AG04449 (cell line): ENCODE measurements at regions of chr19 and their contacts with region 1.

Region 1: GRCh38 chr19:38769635-38770211 is 3.6 kb downstream of the LGALS7 start:
- DNase-seq: no peak
- H3K4me3 ChIP-seq: peak overlapping the region; percentile 18; the same call in 1 of the 2 replicates
- CTCF ChIP-seq: peak; percentile 81

Region 2: GRCh38 chr19:38514812-38515633 is 254.7 kb before region 1 on chr19:
- CTCF ChIA-PET with region 1: no interaction called
- POLR2A ChIA-PET with region 1: no interaction called
- DNase-seq: no peak
- H3K4me3 ChIP-seq: no peak overlapping the region
- CTCF ChIP-seq: peak; percentile 90

Region 3: DNA sequence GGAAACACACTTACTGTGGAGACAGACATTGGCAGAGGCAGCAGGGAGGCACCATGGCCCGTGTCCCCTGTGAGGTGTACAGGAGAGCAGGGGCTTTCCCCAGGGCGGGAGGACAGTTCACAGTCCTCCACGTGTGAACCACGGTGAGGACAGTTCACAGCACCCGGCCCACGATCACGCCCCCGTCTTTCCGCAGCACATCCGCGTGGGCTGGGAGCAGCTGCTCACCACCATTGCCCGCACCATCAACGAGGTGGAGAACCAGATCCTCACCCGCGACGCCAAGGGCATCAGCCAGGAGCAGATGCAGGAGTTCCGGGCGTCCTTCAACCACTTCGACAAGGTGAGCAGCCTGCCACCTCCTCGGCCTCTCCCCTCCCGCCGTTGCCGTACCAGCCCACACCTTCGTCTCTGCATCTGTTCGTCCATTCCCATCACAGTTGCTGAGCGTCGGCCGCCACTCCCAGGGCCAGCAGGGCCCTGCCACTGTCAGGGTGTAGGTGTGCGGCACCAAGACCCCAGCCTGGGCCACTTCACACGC is 42.9 kb before region 1 on chr19:
- CTCF ChIA-PET with region 1: no interaction called
- POLR2A ChIA-PET with region 1: no interaction called
- DNase-seq: no peak
- H3K4me3 ChIP-seq: no peak overlapping the region
- CTCF ChIP-seq: no peak

Region 4: DNA sequence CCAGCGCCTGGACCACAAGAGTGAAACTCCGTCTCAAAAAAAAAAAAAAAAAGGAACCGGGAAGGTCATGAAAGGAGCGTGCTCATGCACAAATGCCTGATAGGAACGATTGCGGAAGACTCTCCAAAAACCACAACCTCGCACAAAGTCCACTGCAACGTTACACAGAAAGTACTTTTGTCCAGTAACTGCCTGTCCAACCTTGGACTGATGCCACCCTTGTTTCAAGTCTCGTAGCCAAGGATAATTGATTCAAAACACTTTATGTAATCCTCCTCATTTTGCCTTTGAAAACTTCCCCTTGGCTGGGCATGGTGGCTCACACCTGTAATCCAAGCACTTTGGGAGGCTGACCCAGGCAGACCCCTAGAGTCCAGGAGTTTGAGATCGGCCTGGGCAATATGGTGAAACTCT is 10.1 kb before region 1 on chr19:
- CTCF ChIA-PET with region 1: interaction called, 19 read pairs
- POLR2A ChIA-PET with region 1: no interaction called
- DNase-seq: no peak
- H3K4me3 ChIP-seq: no peak overlapping the region
- CTCF ChIP-seq: no peak

Region 5: GRCh38 chr19:38781058-38781457 is 11.3 kb after region 1 on chr19:
- CTCF ChIA-PET with region 1: interaction called, 25 read pairs
- POLR2A ChIA-PET with region 1: no interaction called
- DNase-seq: no peak
- H3K4me3 ChIP-seq: no peak overlapping the region
- CTCF ChIP-seq: no peak

Region 6: GRCh38 chr19:38786572-38787265 is 17.0 kb after region 1 on chr19:
- CTCF ChIA-PET with region 1: interaction called, 25 read pairs
- POLR2A ChIA-PET with region 1: no interaction called
- DNase-seq: no peak
- H3K4me3 ChIP-seq: no peak overlapping the region
- CTCF ChIP-seq: no peak